WTC11 (cell line): ENCODE measurements at regions of chr15 and their contacts with region 1.

Region 1: GRCh38 chr15:26864664-26865191 is 2.1 kb upstream of the GABRA5 start:
- DNase-seq: peak; percentile 60
- ATAC-seq: peak; percentile 26
- H3K4me3 Mint-ChIP-seq: peak overlapping the region; percentile 43
- H3K27ac Mint-ChIP-seq: no peak overlapping the region
- H3K4me1 Mint-ChIP-seq: peaks cover 25% of the 10 kb centered on the region
- H3K27me3 Mint-ChIP-seq: peaks cover 38% of the 10 kb centered on the region
- CTCF ChIP-seq: peak; percentile 36; the same call in 1 of the 2 replicates

Region 2: GRCh38 chr15:26179906-26180305 is 684.8 kb before region 1 on chr15:
- CTCF ChIA-PET with region 1: interaction called, 11 read pairs
- POLR2A ChIA-PET with region 1: no interaction called
- DNase-seq: peak; percentile 76
- ATAC-seq: peak; percentile 99
- H3K4me3 Mint-ChIP-seq: no peak overlapping the region
- H3K27ac Mint-ChIP-seq: no peak overlapping the region
- H3K4me1 Mint-ChIP-seq: peaks cover 35% of the 10 kb centered on the region
- H3K27me3 Mint-ChIP-seq: no peaks in the 10 kb centered on the region
- CTCF ChIP-seq: no peak

Region 3: DNA sequence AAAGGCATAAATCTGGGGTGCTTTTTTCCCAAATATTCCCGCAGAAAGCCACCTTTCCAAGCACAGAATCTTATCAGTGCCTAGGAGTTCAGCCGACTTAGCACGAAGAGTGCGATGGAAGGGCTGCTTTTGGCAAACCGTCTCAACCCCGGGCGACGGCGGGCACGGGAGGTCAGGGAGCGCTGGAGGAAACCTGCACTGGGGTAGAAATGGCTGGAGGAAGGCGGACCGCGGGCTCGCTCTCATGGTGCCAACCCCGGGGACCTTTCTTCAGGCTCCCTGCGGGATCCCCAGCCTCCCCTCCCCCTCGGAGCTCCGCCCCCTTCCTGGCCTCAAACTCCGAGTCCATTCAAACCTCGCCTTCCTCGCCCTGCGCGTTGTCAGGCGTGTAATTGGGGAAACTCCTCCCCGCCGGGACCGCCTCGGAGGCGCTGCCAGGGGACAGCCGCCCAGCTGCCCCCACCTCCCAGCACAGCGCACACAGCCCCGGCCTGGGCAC is 106.0 kb after region 1 on chr15 and contains the start of gene GABRG3:
- CTCF ChIA-PET with region 1: no interaction called
- POLR2A ChIA-PET with region 1: no interaction called
- DNase-seq: peak; percentile 72
- ATAC-seq: peak; percentile 41
- H3K4me3 Mint-ChIP-seq: peak within 1 kb of the TSS; percentile 78
- H3K27ac Mint-ChIP-seq: no peak within 1 kb of the TSS
- H3K4me1 Mint-ChIP-seq: peaks cover 7% of the 10 kb centered on the region
- H3K27me3 Mint-ChIP-seq: peaks cover 74% of the 10 kb centered on the region
- CTCF ChIP-seq: no peak
- total RNA-seq, gene GABRG3: 0.30 to 0.72 TPM (median 0.46 TPM) in 3 replicates